Heart left ventricle (tissue), 16 donors: ENCODE measurements at regions of chr4 and their contacts with region 1.

Region 1: DNA sequence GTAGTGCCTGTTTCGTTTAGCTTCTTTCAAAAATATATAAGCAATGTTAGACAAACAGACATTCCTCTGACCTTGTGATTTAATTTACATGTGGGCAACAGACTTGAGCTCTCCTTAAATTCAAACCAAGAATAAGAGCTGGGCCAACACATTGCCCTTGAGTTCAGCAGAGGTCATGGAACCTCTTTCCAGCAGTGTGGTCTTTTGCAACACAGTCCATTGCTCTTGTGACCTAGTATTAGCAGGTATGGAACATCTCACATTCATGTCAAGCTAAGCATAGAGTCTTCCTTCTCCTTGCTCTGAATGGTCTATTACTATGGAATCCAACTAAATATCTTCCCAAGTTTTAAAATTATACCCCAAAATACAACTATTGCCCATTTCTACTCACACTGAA is 33.7 kb upstream of the MND1 start:
- DNase-seq: no peak
- ATAC-seq: peak in 2 of 4 donors; percentile 42 to 46
- H3K4me3 ChIP-seq: no peak overlapping the region
- H3K27ac ChIP-seq: no peak overlapping the region
- H3K4me1 ChIP-seq: peaks cover 0 to 4% (median 0%) of the 10 kb centered on the region in 12 donors
- H3K27me3 ChIP-seq: no peaks in the 10 kb centered on the region
- CTCF ChIP-seq: no peak
- POLR2A ChIP-seq: no peak

Region 2: DNA sequence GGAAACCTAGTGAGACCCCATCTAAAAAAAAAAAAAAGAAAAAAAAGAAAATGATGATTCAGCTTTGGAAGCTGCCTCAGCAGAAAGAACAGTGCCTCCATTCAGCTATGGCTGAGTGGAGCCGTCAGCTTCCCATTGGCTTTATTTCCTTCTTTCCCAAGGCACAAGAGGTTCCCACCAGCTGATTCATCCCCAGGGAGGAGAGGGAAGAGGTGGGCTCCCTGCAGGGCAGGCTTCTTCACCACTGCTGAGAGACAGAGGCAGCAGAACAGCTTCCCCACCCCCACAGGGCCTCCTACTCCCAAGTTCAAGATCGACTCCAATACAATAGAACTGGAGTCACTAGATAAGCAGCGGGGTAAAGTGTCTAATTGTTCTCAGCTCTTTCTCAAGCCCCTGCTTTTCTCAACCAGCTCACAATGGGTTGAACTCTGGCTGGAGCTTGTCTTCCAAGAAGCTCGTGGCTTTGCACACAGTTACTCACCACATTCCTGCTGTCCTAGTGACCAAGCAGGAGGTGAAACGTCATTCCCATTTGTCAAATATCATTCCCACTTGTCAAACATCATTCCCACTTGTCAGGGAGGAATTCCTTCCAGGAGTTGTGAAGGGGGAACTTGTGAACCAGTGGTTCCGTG is 326.9 kb before region 1 on chr4:
- intact Hi-C with region 1: no loop called
- DNase-seq: no peak
- ATAC-seq: no peak
- H3K4me3 ChIP-seq: no peak overlapping the region
- H3K27ac ChIP-seq: no peak overlapping the region
- H3K4me1 ChIP-seq: no peaks in the 10 kb centered on the region
- H3K27me3 ChIP-seq: peaks cover 0 to 19% (median 0%) of the 10 kb centered on the region in 9 donors
- CTCF ChIP-seq: no peak
- POLR2A ChIP-seq: no peak

Region 3: GRCh38 chr4:153274967-153275366 is 35.8 kb before region 1 on chr4:
- intact Hi-C with region 1: loop called in 1 of 10 experiments (anchors 5 kb)
- DNase-seq: no peak
- ATAC-seq: peak in 2 of 4 donors; percentile 24 to 36
- H3K4me3 ChIP-seq: no peak overlapping the region
- H3K27ac ChIP-seq: no peak overlapping the region
- H3K4me1 ChIP-seq: peaks cover 0 to 8% (median 4%) of the 10 kb centered on the region in 12 donors
- H3K27me3 ChIP-seq: no peaks in the 10 kb centered on the region
- CTCF ChIP-seq: no peak
- POLR2A ChIP-seq: no peak